Right cardiac atrium (tissue), 5 donors: ENCODE measurements at regions of chr2 and their contacts with region 1.

Region 1: GRCh38 chr2:16608661-16609643 is 56.7 kb downstream of the CYRIA start:
- DNase-seq: peak; percentile 84 to 92 (median 92)
- ATAC-seq: peak; percentile 91 to 93
- H3K4me3 ChIP-seq: peak overlapping the region; percentile 46
- H3K27ac ChIP-seq: peak overlapping the region; percentile 43
- H3K4me1 ChIP-seq: no peaks in the 10 kb centered on the region
- H3K27me3 ChIP-seq: no peaks in the 10 kb centered on the region

Region 2: GRCh38 chr2:15636972-15637785 is 971.8 kb before region 1 on chr2:
- intact Hi-C with region 1: loop called in 2 of 4 experiments (anchors 5 to 10 kb)
- DNase-seq: peak; percentile 66 to 88 (median 74)
- ATAC-seq: peak; percentile 85 to 86
- H3K4me3 ChIP-seq: no peak overlapping the region
- H3K27ac ChIP-seq: no peak overlapping the region
- H3K4me1 ChIP-seq: no peaks in the 10 kb centered on the region
- H3K27me3 ChIP-seq: no peaks in the 10 kb centered on the region

Region 3: GRCh38 chr2:16478434-16479210 is 130.3 kb before region 1 on chr2:
- intact Hi-C with region 1: no loop called
- DNase-seq: no peak
- ATAC-seq: no peak
- H3K4me3 ChIP-seq: no peak overlapping the region
- H3K27ac ChIP-seq: no peak overlapping the region
- H3K4me1 ChIP-seq: no peaks in the 10 kb centered on the region
- H3K27me3 ChIP-seq: no peaks in the 10 kb centered on the region

Region 4: DNA sequence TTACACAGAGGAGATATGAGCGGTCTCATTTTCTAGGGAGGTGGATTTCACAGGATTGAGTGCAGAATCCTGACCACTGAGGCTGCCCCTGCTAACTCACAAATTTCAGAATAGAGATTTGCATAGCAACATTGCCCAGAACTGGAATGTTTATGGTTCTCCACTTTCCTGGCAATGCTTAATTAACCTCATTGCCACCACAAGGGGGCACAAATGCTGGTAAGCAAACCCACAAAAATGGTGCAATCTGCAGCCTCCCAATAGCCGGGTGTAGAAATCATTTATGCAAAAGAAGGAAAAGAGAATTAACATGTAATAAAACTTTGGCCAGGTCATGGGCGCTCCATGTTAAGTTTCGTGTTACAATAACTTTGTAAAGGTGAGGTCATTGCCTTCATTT is 55.7 kb before region 1 on chr2:
- intact Hi-C with region 1: loop called (anchors 2 to 5 kb)
- DNase-seq: peak in 1 of 3 donors; percentile 51
- ATAC-seq: peak in 1 of 2 donors; percentile 36
- H3K4me3 ChIP-seq: no peak overlapping the region
- H3K27ac ChIP-seq: no peak overlapping the region
- H3K4me1 ChIP-seq: no peaks in the 10 kb centered on the region
- H3K27me3 ChIP-seq: no peaks in the 10 kb centered on the region

Region 5: DNA sequence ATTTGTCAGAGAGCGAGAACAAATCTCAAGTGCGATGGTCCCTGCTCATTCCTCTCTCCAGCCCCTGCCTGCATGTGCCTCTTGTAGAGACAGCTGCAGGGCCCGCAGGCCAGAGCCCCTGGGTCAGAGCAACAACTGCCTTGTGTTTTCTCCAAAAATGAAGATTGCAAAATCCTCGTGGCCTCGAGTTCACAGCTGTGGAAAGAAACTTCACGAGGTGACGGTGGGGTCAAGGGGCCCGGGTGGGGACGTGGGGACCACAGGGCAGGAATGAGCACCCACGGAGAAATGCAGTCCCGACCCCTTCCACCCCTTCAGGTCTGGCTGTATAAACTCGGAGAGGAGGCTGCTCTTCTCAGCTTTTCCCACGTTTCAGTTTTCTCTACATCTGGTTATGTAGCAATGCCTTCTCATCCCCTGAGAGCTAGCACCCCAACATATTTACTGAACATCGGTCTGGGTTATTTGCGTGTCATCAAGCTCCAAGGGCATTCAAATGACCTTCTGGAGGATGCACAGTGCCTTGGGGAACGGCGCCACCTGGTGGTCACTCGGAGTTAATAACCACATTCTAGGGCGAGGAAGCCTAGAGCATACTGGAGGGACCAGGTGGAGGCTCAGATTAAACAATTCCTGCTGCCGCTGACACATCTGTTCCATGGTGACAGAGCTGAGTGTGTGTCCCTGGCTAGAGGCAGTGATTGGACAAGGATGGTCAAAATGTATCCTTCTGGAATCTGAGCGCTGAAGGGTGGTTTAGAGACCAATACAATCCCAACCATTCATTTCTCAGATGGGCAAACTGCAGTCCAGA is 148.1 kb after region 1 on chr2:
- intact Hi-C with region 1: loop called in 2 of 4 experiments (anchors 2 kb)
- DNase-seq: peak; percentile 80 to 90 (median 87)
- ATAC-seq: peak; percentile 90 to 94
- H3K4me3 ChIP-seq: no peak overlapping the region
- H3K27ac ChIP-seq: no peak overlapping the region
- H3K4me1 ChIP-seq: no peaks in the 10 kb centered on the region
- H3K27me3 ChIP-seq: no peaks in the 10 kb centered on the region

Region 6: GRCh38 chr2:17000184-17000482 is 391.2 kb after region 1 on chr2:
- intact Hi-C with region 1: no loop called
- DNase-seq: no peak
- ATAC-seq: no peak
- H3K4me3 ChIP-seq: no peak overlapping the region
- H3K27ac ChIP-seq: no peak overlapping the region
- H3K4me1 ChIP-seq: no peaks in the 10 kb centered on the region
- H3K27me3 ChIP-seq: no peaks in the 10 kb centered on the region